CD4-positive, alpha-beta T cell (primary cell): ENCODE measurements at regions of chr1 and their contacts with region 1.

Region 1: DNA sequence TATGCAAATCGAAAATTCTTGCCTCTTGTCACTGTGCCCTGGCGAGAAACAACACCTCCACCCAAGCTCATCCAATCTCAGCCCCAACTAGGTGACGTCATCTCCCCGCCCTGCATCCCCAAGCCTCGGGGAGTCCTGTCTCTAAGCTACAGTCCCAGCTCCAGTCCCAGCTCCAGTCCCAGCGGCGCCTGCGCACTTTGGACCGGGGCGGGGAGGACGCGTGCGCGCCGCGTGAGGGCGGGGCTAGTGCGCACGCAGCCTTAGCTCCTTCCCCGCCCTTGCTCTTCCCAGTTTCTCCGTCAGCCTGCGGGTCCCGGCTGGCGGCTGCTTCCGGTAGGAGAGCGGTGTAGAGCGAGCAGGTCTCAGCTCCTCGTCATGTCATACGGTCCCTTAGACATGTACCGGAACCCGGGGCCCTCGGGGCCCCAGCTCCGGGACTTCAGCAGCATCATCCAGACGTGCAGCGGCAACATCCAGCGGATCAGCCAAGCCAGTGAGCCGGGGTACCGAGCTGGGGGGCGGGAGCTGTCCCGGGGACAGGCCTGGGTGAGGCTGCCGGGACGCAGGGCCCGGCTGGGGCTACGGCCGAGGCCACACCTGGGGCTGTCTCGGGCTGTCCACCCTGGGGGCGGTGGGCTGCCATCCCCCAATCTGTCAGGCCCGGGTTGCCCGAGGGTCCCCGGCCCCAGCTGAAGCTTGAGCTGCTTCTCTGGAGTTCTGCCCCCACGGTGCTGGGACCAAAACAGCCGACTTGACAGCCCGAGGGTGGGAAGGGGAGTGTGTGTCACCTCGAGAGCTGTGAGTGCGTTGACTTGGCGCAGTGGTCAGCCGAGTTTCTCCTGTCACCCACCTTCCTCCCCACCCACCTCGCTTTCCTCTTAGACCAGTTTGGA is at the start of gene STX12:
- DNase-seq: peak; percentile 95 to 100 (median 98)
- ATAC-seq: peak; percentile 91
- H3K4me3 ChIP-seq: peak within 1 kb of the TSS; percentile 72
- H3K4me3 Mint-ChIP-seq: peak within 1 kb of the TSS; percentile 97
- H3K27ac ChIP-seq: peak within 1 kb of the TSS; percentile 86 to 91
- H3K27ac Mint-ChIP-seq: peak within 1 kb of the TSS; percentile 93
- H3K4me1 ChIP-seq: peaks cover 22% of the 10 kb centered on the region
- H3K4me1 Mint-ChIP-seq: peaks cover 30% of the 10 kb centered on the region
- H3K27me3 ChIP-seq: no peaks in the 10 kb centered on the region
- H3K27me3 Mint-ChIP-seq: no peaks in the 10 kb centered on the region
- CTCF ChIP-seq: no peak
- total RNA-seq, gene STX12: 20.3 to 22.7 TPM

Region 2: DNA sequence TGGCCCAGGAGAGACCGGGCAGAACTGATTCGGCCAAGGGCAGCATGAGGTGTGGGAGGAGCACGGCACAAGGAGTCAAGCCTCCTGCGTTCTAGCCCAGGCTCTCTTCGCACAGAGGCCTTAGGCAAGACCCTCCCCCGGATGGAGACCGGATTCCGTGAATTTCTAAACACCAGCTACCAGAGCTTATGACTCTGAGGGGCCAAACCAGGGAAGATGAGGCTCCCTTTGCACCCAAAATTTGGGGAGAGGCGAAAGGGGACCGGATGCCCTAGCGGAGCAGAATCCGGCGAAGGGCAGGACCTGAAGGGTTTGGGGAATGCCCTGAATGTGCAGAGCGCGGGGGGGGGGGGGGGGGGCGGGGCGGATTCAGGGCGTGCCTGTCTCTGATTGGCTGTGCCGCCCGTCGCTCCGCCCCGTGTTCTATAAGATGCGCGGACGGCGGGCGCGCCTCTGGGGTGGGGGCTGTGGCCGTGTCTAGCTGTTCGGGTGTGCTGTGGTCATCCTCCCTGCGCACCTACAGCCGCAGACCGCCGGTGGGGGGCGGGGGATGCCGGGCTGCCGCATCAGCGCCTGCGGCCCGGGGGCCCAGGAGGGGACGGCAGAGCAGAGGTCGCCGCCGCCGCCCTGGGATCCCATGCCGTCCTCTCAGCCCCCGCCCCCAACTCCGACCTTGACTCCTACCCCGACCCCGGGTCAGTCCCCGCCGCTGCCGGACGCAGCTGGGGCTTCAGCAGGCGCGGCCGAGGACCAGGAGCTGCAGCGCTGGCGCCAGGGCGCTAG is 779.8 kb before region 1 on chr1 and contains the start of gene TRNP1:
- CTCF ChIA-PET with region 1: no interaction called
- POLR2A ChIA-PET with region 1: no interaction called
- intact Hi-C with region 1: loop called in 1 of 2 experiments (anchors 10 kb)
- DNase-seq: peak; percentile 39 to 87 (median 59)
- ATAC-seq: peak; percentile 60
- H3K4me3 ChIP-seq: peak within 1 kb of the TSS; percentile 36
- H3K4me3 Mint-ChIP-seq: peak within 1 kb of the TSS; percentile 89
- H3K27ac ChIP-seq: no peak within 1 kb of the TSS
- H3K27ac Mint-ChIP-seq: no peak within 1 kb of the TSS
- H3K4me1 ChIP-seq: peaks cover 23% of the 10 kb centered on the region
- H3K4me1 Mint-ChIP-seq: peaks cover 17% of the 10 kb centered on the region
- H3K27me3 ChIP-seq: peaks cover 42 to 48% of the 10 kb centered on the region in 2 experiments
- H3K27me3 Mint-ChIP-seq: peaks cover 68% of the 10 kb centered on the region
- CTCF ChIP-seq: no peak
- total RNA-seq, gene TRNP1: 0.19 to 0.20 TPM

Region 3: DNA sequence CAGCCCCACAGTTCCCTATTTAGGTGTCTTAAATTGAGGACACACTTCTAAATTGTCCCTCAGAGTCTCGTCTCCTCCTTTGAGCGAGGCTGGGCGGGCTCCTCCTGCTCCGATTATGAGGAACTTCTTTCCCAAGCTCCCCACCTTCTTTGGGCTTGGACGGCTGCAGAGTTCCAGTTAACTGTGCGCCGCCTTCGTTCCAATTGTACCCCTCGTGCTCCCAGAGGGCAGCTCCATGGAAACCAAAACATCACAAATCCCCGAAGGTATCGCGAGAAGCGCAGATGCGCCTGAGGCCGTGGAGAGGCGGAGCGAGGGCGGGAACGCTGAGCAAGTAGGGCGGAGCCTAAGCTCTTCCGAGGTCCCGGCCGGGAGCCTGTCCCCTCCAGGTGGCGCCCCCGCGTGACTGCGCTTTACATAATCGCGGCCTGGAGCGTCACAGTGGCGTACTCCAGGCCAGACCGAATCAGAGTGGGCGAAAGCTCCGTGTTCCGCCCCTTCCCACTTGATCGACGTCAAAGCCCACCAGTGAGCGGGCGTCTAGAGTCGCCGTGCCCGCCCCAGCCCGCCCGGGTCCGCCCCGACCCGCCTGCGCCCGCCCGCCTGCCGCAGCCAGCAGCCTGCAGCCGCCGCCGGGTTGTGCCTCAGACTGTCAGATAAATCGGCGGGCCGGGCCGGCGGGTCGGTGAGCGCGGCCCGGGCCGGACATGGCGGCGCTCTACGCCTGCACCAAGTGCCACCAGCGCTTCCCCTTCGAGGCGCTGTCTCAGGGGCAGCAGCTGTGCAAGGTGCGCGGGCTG is 47.6 kb before region 1 on chr1 and contains the start of gene FAM76A:
- CTCF ChIA-PET with region 1: interaction called, 5 read pairs
- POLR2A ChIA-PET with region 1: interaction called, 58 read pairs
- intact Hi-C with region 1: loop called (anchors 1 to 5 kb)
- DNase-seq: peak; percentile 99 to 100 (median 99)
- ATAC-seq: peak; percentile 92
- H3K4me3 ChIP-seq: peak within 1 kb of the TSS; percentile 74
- H3K4me3 Mint-ChIP-seq: peak within 1 kb of the TSS; percentile 85
- H3K27ac ChIP-seq: peak within 1 kb of the TSS; percentile 82 to 85
- H3K27ac Mint-ChIP-seq: peak within 1 kb of the TSS; percentile 89
- H3K4me1 ChIP-seq: peaks cover 19% of the 10 kb centered on the region
- H3K4me1 Mint-ChIP-seq: peaks cover 24% of the 10 kb centered on the region
- H3K27me3 ChIP-seq: no peaks in the 10 kb centered on the region
- H3K27me3 Mint-ChIP-seq: no peaks in the 10 kb centered on the region
- CTCF ChIP-seq: peak; percentile 60
- total RNA-seq, gene FAM76A: 26.0 to 28.7 TPM

Region 4: GRCh38 chr1:27830621-27831424 is 57.6 kb after region 1 on chr1 and contains the start of gene PPP1R8:
- CTCF ChIA-PET with region 1: no interaction called
- POLR2A ChIA-PET with region 1: interaction called, 15 read pairs
- intact Hi-C with region 1: loop called in 1 of 2 experiments (anchors 2 kb)
- DNase-seq: peak; percentile 73 to 96 (median 86)
- ATAC-seq: peak; percentile 99
- H3K4me3 ChIP-seq: peak within 1 kb of the TSS; percentile 93
- H3K4me3 Mint-ChIP-seq: peak within 1 kb of the TSS; percentile 96
- H3K27ac ChIP-seq: peak within 1 kb of the TSS; percentile 64 to 74
- H3K27ac Mint-ChIP-seq: peak within 1 kb of the TSS; percentile 93
- H3K4me1 ChIP-seq: peaks cover 27% of the 10 kb centered on the region
- H3K4me1 Mint-ChIP-seq: peaks cover 46% of the 10 kb centered on the region
- H3K27me3 ChIP-seq: no peaks in the 10 kb centered on the region
- H3K27me3 Mint-ChIP-seq: no peaks in the 10 kb centered on the region
- CTCF ChIP-seq: no peak
- total RNA-seq, gene PPP1R8: 14.8 to 15.7 TPM

Region 5: DNA sequence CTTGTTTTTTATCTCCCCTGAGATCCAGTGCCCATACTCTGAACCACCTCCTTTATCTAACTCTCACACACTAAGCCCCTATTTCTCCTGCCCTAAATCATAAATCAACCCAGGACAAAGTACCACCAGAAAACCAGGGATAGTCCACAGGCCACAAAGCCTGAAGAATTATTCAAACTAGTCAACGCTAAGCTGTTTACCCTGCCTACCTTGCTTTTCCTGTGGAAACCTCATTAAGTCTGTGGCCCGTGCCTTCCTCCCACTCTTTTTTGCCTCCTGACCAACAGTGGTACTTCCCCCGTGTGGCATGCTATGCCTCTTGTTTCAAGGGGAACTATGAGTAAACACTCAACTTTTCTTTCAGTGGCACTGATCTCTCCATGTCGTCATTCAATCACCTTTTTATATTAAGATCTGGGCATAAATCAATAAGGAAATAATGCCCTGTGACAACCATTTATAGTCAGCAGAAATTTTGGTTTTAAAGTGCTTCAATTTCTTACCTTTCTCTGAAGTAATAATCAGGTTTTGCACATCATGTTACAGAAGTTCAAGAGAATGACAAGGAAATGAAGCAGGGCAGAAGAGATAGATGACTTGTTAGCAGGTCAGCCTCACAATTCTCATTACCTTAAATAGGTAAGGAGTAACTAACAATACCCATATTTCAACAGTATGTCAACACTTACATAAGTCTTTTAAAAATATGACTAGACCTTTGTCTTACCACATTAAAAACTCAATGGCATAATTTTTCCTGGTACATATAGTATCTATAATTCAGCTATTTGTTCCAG is 283.1 kb after region 1 on chr1:
- CTCF ChIA-PET with region 1: no interaction called
- POLR2A ChIA-PET with region 1: no interaction called
- intact Hi-C with region 1: no loop called
- DNase-seq: peak in 13 of 14 experiments; percentile 2 to 77 (median 26)
- ATAC-seq: peak; percentile 90
- H3K4me3 ChIP-seq: no peak overlapping the region
- H3K4me3 Mint-ChIP-seq: no peak overlapping the region
- H3K27ac ChIP-seq: peak overlapping the region in 1 of 2 donors; percentile 25
- H3K27ac Mint-ChIP-seq: peak overlapping the region; percentile 57
- H3K4me1 ChIP-seq: peaks cover 4% of the 10 kb centered on the region
- H3K4me1 Mint-ChIP-seq: peaks cover 37% of the 10 kb centered on the region
- H3K27me3 ChIP-seq: no peaks in the 10 kb centered on the region
- H3K27me3 Mint-ChIP-seq: no peaks in the 10 kb centered on the region
- CTCF ChIP-seq: no peak

Region 6: GRCh38 chr1:28240024-28240423 is 466.8 kb after region 1 on chr1:
- CTCF ChIA-PET with region 1: no interaction called
- POLR2A ChIA-PET with region 1: no interaction called
- intact Hi-C with region 1: no loop called
- DNase-seq: no peak
- ATAC-seq: no peak
- H3K4me3 ChIP-seq: no peak overlapping the region
- H3K4me3 Mint-ChIP-seq: no peak overlapping the region
- H3K27ac ChIP-seq: no peak overlapping the region
- H3K27ac Mint-ChIP-seq: no peak overlapping the region
- H3K4me1 ChIP-seq: peaks cover 54% of the 10 kb centered on the region
- H3K4me1 Mint-ChIP-seq: peaks cover 22% of the 10 kb centered on the region
- H3K27me3 ChIP-seq: no peaks in the 10 kb centered on the region
- H3K27me3 Mint-ChIP-seq: no peaks in the 10 kb centered on the region
- CTCF ChIP-seq: no peak